ENCODE measurements at regions of chr7 and their contacts with region 1.

Region 1: GRCh38 chr7:23346316-23346715 is 47.2 kb downstream of the MALSU1 start:
- DNase-seq: peak in 3 of 14 experiments; percentile 45 to 66 (median 51)
- ATAC-seq: peak; percentile 69
- H3K4me3 ChIP-seq: peak overlapping the region; percentile 48
- H3K4me3 Mint-ChIP-seq: peak overlapping the region; percentile 82
- H3K27ac ChIP-seq: no peak overlapping the region
- H3K27ac Mint-ChIP-seq: peak overlapping the region; percentile 73
- H3K4me1 ChIP-seq: peaks cover 2% of the 10 kb centered on the region
- H3K4me1 Mint-ChIP-seq: peaks cover 29% of the 10 kb centered on the region
- H3K27me3 ChIP-seq: no peaks in the 10 kb centered on the region
- H3K27me3 Mint-ChIP-seq: no peaks in the 10 kb centered on the region
- CTCF ChIP-seq: no peak

Region 2: GRCh38 chr7:23284871-23285270 is 61.4 kb before region 1 on chr7:
- CTCF ChIA-PET with region 1: no interaction called
- POLR2A ChIA-PET with region 1: interaction called, 5 read pairs
- intact Hi-C with region 1: loop called in 1 of 2 experiments (anchors 5 kb)
- DNase-seq: no peak
- ATAC-seq: no peak
- H3K4me3 ChIP-seq: no peak overlapping the region
- H3K4me3 Mint-ChIP-seq: no peak overlapping the region
- H3K27ac ChIP-seq: no peak overlapping the region
- H3K27ac Mint-ChIP-seq: no peak overlapping the region
- H3K4me1 ChIP-seq: peaks cover 12% of the 10 kb centered on the region
- H3K4me1 Mint-ChIP-seq: peaks cover 11% of the 10 kb centered on the region
- H3K27me3 ChIP-seq: no peaks in the 10 kb centered on the region
- H3K27me3 Mint-ChIP-seq: no peaks in the 10 kb centered on the region
- CTCF ChIP-seq: no peak